Activated naive CD4-positive, alpha-beta T cell treated with anti-CD3 and anti-CD28 coated beads, Interleukin-2, amount 10 ng/mL, durations not matched to agents 7 days and 5 days (primary cell): ENCODE measurements at regions of chr17 and their contacts with region 1.

Region 1: DNA sequence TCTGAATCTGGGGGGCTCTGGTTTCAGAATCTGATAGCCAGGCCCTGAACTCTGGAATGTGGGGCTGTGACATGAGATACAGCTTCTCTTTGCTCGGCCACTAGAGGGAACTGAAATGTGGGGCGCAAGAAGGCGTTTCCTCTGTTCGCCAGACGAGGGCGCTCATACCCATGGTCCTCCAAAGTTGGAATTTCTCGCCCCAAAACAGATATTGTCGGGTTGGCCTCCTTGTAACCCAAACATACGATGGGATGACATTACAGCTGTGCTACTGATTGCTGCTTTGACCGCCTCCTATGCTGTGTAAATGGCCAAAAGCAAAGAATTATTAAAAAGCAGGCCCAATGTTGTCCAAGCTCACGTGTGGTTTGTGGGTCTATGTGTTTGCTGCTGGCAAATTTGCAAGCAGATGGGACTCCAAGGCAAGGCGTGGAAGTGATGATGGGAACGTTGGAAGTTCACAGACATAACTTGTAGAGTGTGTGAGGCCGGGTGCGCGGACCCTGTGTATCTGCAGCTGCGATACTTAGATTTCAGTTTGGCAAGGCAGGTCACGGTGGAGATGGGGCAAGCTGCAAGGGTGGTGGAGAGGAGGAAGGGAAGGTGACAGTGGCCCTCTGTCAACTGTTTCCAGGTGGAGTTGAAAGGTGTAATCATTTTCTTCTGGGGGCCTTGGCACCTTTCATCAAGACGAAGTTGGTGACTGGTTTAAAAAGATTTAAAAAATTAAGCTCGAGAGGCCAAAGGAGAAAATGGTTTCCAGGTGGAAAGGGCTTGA is 13.0 kb upstream of the MSI2 start:
- DNase-seq: peak; percentile 82
- H3K4me3 Mint-ChIP-seq: no peak overlapping the region
- H3K27ac Mint-ChIP-seq: no peak overlapping the region
- H3K4me1 Mint-ChIP-seq: peaks cover 7% of the 10 kb centered on the region
- H3K27me3 Mint-ChIP-seq: peaks cover 47% of the 10 kb centered on the region

Region 2: GRCh38 chr17:57255776-57256681 is 12.7 kb after region 1 on chr17 and contains the start of gene MSI2:
- CTCF ChIA-PET with region 1: interaction called, 15 read pairs
- DNase-seq: peak; percentile 94
- H3K4me3 Mint-ChIP-seq: peak within 1 kb of the TSS; percentile 94
- H3K27ac Mint-ChIP-seq: peak within 1 kb of the TSS; percentile 89
- H3K4me1 Mint-ChIP-seq: peaks cover 50% of the 10 kb centered on the region
- H3K27me3 Mint-ChIP-seq: peaks cover 23% of the 10 kb centered on the region

Region 3: GRCh38 chr17:57408071-57408811 is 164.9 kb after region 1 on chr17:
- CTCF ChIA-PET with region 1: interaction called, 58 read pairs
- DNase-seq: peak; percentile 58
- H3K4me3 Mint-ChIP-seq: no peak overlapping the region
- H3K27ac Mint-ChIP-seq: peak overlapping the region; percentile 62
- H3K4me1 Mint-ChIP-seq: peaks cover 32% of the 10 kb centered on the region
- H3K27me3 Mint-ChIP-seq: no peaks in the 10 kb centered on the region

Region 4: DNA sequence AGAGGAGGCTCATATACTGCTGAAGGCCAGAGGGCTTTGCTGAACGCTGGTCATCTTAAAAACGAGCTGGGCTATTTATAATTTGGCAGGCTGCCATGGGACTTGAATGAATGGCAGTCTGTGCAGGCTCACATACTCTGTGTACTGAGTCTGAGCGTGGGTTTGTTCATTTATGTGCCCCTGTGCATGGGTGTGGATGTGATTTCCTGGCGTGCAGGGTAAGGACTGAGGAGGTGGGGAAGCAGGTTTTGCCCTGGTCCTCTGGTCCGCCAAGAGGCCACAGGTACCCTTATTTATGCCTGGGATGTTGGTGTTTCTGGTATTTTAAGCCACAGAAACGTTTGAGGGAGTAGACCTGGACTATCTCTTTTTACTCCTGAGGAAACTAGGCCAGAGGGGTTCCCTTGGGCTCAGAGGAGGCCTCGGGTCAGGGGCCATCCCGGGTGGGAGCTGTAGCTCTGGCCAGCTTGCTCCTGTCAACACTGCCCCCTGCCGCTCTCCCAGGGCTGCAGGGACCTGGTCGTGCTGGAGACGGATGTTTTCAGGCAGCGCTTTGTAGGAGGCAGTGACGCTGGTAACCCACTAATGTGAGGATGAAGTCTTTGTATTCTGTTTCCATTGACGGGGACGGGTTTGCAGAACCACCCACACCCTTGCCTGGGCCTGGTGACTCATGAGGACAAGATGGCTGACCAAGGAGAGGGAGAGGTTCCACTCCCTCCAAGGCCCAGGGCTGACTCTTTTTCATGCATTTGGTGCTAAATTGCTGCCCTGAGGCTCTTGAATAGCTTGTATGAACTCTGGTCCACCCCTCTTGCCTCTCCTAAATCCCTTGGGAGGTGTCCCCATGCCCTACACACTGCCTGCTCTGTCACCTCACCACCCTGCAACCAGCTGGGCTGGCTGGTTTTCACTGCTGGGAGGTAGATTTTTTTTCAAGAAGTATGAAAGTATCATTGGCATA is 197.4 kb after region 1 on chr17:
- CTCF ChIA-PET with region 1: interaction called, 80 read pairs
- DNase-seq: peak; percentile 65
- H3K4me3 Mint-ChIP-seq: no peak overlapping the region
- H3K27ac Mint-ChIP-seq: peak overlapping the region; percentile 76
- H3K4me1 Mint-ChIP-seq: peaks cover 53% of the 10 kb centered on the region
- H3K27me3 Mint-ChIP-seq: no peaks in the 10 kb centered on the region

Region 5: GRCh38 chr17:57671667-57672632 is 428.6 kb after region 1 on chr17:
- CTCF ChIA-PET with region 1: interaction called, 41 read pairs
- DNase-seq: peak; percentile 79
- H3K4me3 Mint-ChIP-seq: peak overlapping the region; percentile 10
- H3K27ac Mint-ChIP-seq: peak overlapping the region; percentile 88
- H3K4me1 Mint-ChIP-seq: peaks cover 28% of the 10 kb centered on the region
- H3K27me3 Mint-ChIP-seq: no peaks in the 10 kb centered on the region

Region 6: GRCh38 chr17:57747221-57748017 is 504.1 kb after region 1 on chr17:
- CTCF ChIA-PET with region 1: interaction called, 19 read pairs
- DNase-seq: peak; percentile 57
- H3K4me3 Mint-ChIP-seq: no peak overlapping the region
- H3K27ac Mint-ChIP-seq: no peak overlapping the region
- H3K4me1 Mint-ChIP-seq: peaks cover 7% of the 10 kb centered on the region
- H3K27me3 Mint-ChIP-seq: peaks cover 42% of the 10 kb centered on the region